Activated CD4-positive, alpha-beta T cell treated with anti-CD3 and anti-CD28 coated beads for 36 hours (primary cell): ENCODE measurements at regions of chr6 and their contacts with region 1.

Region 1: DNA sequence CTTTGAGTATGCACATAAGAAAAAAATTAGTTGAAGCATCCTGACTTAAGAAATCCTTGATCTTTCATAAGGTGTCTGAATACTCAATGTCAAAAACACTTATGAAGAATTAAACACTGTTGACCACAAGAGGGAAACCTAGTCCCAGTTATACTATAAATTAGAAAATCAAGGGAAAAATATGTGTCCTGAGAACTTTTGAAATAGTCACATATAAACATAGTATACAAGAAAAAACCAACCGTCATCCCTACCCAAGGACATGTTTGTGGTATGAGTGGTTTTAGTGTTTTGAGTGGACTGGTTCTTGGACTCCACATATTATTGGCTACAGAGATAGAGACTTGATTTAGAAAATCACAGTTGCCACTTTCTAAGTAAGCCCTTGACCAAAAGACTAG is 7.6 kb upstream of the HLA-DRA start:
- DNase-seq: no peak
- ATAC-seq: no peak
- H3K4me3 Mint-ChIP-seq: no peak overlapping the region
- H3K27ac Mint-ChIP-seq: no peak overlapping the region
- H3K4me1 Mint-ChIP-seq: no peaks in the 10 kb centered on the region
- H3K27me3 Mint-ChIP-seq: peaks cover 12% of the 10 kb centered on the region

Region 2: DNA sequence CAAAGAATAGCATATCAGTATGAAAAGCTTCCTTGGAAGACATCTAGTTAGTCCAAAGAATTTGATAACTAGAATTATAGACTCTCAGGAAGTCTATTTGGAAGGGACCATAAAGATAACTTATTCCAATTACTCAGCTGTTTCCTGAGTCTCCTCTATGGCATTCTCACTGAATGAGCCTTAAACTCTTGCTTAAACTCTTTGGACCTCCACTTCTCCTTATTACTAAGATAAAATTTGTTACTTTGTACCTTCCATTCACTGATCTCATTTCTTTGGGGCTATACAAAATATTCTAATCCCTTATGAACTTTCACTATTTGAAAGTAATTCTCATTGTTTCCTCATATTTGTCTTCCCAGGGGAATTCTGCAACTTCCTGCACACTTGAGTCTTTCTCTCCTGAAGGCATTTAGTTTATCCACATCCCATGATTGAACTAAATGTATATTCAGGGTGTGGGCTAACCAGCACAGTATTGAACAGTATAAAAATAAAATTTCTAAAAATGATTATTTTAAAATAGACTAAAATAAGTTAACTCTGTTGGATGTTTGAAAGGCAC is 141.1 kb before region 1 on chr6:
- CTCF ChIA-PET with region 1: no interaction called
- POLR2A ChIA-PET with region 1: no interaction called
- intact Hi-C with region 1: no loop called
- DNase-seq: no peak
- ATAC-seq: no peak
- H3K4me3 Mint-ChIP-seq: no peak overlapping the region
- H3K27ac Mint-ChIP-seq: no peak overlapping the region
- H3K4me1 Mint-ChIP-seq: no peaks in the 10 kb centered on the region
- H3K27me3 Mint-ChIP-seq: peaks cover 29% of the 10 kb centered on the region

Region 3: DNA sequence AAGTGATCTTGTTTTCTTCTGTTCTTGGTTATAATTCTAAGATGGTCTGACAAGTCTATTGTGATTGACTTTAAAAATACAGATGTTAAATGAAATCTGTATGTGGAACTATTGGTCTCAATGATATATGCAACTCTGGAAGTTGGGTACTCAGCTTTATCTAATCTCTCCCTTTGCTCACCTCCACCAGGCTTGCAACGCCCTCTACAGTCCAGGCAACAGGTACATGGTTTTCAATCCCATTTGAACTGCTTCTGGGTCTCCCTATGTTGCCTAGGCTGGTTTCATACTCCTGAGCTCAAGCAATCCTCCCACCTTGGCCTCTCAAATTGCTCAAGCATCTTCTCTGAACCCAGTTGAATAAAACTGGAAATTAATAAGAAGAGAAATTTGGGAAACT is 260.0 kb after region 1 on chr6:
- CTCF ChIA-PET with region 1: interaction called, 8 read pairs
- POLR2A ChIA-PET with region 1: no interaction called
- intact Hi-C with region 1: loop called (anchors 1 kb)
- DNase-seq: peak; percentile 80
- ATAC-seq: peak; percentile 82
- H3K4me3 Mint-ChIP-seq: no peak overlapping the region
- H3K27ac Mint-ChIP-seq: no peak overlapping the region
- H3K4me1 Mint-ChIP-seq: peaks cover 8% of the 10 kb centered on the region
- H3K27me3 Mint-ChIP-seq: peaks cover 16% of the 10 kb centered on the region

Region 4: DNA sequence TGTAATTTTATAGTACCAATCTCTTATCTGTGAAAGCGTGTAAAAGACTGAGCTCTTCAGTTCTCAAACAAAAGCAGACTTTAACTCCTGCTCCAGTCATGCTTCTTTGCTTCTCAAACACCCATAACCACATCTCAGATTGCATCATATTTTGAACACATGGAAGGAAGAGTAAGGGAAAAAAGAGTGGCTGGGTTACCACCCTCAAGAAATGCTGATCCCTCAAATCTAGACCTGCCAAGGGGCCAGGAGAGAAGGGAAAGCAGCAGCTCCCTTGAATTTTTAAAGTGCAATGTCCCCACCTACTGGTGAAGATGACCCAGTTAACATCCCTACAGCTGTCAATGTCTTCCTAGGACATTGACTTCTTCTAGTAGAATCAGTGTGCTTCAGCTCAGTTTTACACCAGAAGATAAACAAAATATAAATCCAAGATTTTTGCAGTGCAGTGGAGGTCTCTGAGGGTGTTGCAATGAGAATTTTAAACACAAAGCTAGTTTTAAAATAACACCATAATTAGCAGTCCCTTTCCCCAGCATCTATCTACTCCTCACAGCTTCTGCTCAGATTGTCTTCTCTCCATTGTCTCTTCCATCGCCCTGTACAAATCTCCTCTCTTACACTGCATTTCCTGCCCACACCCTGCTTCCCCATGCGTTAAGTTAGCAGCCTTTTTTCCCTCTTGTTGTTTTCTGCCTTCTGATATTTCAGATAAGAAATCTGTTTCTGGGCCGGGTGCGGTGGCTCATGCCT is 353.9 kb after region 1 on chr6:
- CTCF ChIA-PET with region 1: interaction called, 11 read pairs
- POLR2A ChIA-PET with region 1: no interaction called
- intact Hi-C with region 1: loop called in 1 of 2 experiments (anchors 5 kb)
- DNase-seq: peak; percentile 45
- ATAC-seq: peak; percentile 78
- H3K4me3 Mint-ChIP-seq: no peak overlapping the region
- H3K27ac Mint-ChIP-seq: no peak overlapping the region
- H3K4me1 Mint-ChIP-seq: no peaks in the 10 kb centered on the region
- H3K27me3 Mint-ChIP-seq: peaks cover 25% of the 10 kb centered on the region